ENCODE measurements at regions of chr20 and their contacts with region 1.

Region 1: GRCh38 chr20:24483435-24484080 is 14.1 kb downstream of the SYNDIG1 start:
- DNase-seq: no peak
- H3K4me3 ChIP-seq: no peak overlapping the region
- H3K27ac ChIP-seq: no peak overlapping the region
- H3K4me1 ChIP-seq: no peaks in the 10 kb centered on the region
- H3K27me3 ChIP-seq: 0 out of 2 replicates have a peak, but pooled peaks cover under 1% of the 10 kb centered on the region

Region 2: GRCh38 chr20:24533449-24533848 is 49.9 kb after region 1 on chr20:
- in situ Hi-C with region 1: loop called (anchors 5 kb)
- DNase-seq: no peak
- H3K4me3 ChIP-seq: no peak overlapping the region
- H3K27ac ChIP-seq: no peak overlapping the region
- H3K4me1 ChIP-seq: peaks cover 6% of the 10 kb centered on the region
- H3K27me3 ChIP-seq: no peaks in the 10 kb centered on the region

Region 3: DNA sequence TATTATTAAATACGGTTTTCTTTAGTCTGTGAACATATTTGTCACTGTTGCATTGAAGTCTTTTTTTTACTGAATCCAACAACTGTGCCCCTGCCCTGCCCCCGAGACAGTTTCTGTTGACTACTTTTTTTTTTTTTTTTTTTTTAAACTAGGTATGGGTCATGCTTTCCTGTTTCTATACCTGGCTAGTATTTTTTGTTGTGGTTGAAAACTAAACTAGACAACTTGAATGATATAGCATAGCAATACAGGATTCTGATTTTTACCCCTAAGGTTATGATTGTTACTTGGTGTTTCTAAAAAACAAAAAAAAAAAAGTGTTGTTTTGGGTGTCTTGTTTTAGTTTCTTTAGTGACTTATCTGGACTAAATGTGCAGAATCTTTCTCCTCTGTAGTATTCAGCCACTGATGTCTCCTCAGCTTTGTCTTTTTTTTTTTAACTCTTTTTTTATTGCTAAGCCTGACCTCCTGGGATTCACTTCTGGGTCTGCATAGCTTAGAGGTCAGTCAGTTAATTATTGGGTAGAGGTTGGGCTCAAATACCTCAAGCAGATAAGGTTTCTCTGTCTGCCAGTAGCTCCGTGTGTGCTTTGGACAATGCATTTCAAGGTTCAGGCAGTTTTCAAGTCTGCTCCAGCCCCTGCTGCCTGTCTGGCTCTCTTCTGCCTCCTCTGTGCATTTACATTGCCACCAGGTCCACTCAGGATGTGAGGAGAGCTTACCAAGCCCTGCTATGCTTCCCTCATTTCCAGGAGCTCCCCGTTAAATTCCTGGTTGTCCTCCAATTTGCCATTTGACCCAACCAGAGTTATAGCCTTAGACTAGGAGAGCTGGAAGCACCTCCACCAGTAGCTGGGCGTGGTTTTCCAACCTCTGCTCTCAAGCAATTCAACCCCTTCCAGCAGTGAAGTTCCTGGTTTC is 77.3 kb after region 1 on chr20:
- in situ Hi-C with region 1: no loop called
- DNase-seq: no peak
- H3K4me3 ChIP-seq: no peak overlapping the region
- H3K27ac ChIP-seq: no peak overlapping the region
- H3K4me1 ChIP-seq: no peaks in the 10 kb centered on the region
- H3K27me3 ChIP-seq: 0 out of 2 replicates have a peak, but pooled peaks cover 8% of the 10 kb centered on the region

Region 4: GRCh38 chr20:24577271-24577909 is 93.8 kb after region 1 on chr20:
- in situ Hi-C with region 1: no loop called
- DNase-seq: peak; percentile 6
- H3K4me3 ChIP-seq: no peak overlapping the region
- H3K27ac ChIP-seq: no peak overlapping the region
- H3K4me1 ChIP-seq: no peaks in the 10 kb centered on the region
- H3K27me3 ChIP-seq: no peaks in the 10 kb centered on the region

Region 5: GRCh38 chr20:25510202-25510601 is 1026.6 kb after region 1 on chr20:
- in situ Hi-C with region 1: no loop called
- DNase-seq: no peak
- H3K4me3 ChIP-seq: no peak overlapping the region
- H3K27ac ChIP-seq: no peak overlapping the region
- H3K4me1 ChIP-seq: peaks cover 7% of the 10 kb centered on the region; the same call in 1 of the 2 replicates
- H3K27me3 ChIP-seq: no peaks in the 10 kb centered on the region